ENCODE measurements at regions of chr9 and their contacts with region 1.

Region 1: GRCh38 chr9:133406480-133407307 is 11.1 kb downstream of the REXO4 start:
- DNase-seq: peak; percentile 68 to 86 (median 77)
- ATAC-seq: peak; percentile 81 to 86 (median 82)
- H3K4me3 ChIP-seq: no peak overlapping the region
- H3K27ac ChIP-seq: no peak overlapping the region
- H3K4me1 ChIP-seq: peaks cover 0 to 17% (median 0%) of the 10 kb centered on the region in 12 donors
- H3K27me3 ChIP-seq: no peaks in the 10 kb centered on the region
- CTCF ChIP-seq: peak; percentile 83 to 94 (median 89)
- POLR2A ChIP-seq: no peak

Region 2: DNA sequence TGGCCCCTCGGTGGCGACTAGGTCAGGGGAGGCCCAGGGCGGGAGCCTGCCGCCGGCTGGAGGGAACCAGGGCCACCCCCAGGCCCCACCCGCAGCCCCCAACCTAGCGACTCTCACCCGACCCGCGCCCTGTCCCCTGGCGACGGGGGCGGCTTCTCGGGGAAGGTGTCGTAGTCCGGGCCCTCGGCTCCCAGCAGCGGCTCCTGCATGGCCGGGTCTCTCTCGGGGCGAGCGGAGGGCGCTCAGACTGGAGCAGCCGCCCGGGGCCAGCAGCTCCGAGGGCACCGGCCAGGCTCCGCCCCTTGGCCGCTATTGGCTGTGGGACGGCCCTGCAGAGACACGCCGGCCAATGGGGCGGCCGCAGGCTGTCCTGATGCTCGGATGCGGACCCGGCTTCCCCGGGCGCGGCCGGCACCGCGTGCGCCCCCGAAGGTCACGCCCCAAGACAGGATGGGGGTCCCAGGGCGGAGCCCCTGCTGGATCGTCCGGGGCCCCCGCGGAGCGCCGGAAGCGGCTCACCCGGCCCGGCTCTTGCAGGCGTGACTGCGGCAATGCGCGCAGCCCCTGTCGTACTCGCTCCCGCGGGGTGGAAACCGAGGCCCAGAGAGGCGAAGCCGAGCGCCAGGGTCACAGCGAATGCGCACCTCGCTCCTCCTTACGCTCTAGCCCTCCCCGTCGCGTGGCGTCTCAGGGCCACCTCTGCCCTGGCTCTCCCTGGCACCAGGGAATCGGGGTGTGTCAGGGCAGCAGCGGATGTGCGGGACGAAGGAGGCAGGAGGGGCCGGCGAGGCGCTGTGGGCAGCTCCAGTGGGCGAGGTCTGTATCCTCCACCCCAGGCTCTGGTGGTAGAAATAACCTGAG is 72.4 kb after region 1 on chr9 and contains the start of gene SLC2A6:
- intact Hi-C with region 1: loop called in 2 of 10 experiments (anchors 2 kb)
- DNase-seq: peak; percentile 88 to 93 (median 92)
- ATAC-seq: peak; percentile 91 to 99 (median 98)
- H3K4me3 ChIP-seq: peak within 1 kb of the TSS; percentile 28 to 84 (median 64)
- H3K27ac ChIP-seq: peak within 1 kb of the TSS in 11 of 12 donors; percentile 52 to 87 (median 83)
- H3K4me1 ChIP-seq: peaks cover 0 to 53% (median 17%) of the 10 kb centered on the region in 12 donors
- H3K27me3 ChIP-seq: no peaks in the 10 kb centered on the region
- CTCF ChIP-seq: no peak
- POLR2A ChIP-seq: peak in 1 of 2 donors; percentile 79
- total RNA-seq, gene SLC2A6: 1.8 to 10.4 (median 3.2) TPM

Region 3: GRCh38 chr9:133714606-133715294 is 308.1 kb after region 1 on chr9:
- intact Hi-C with region 1: no loop called
- DNase-seq: peak; percentile 49 to 88 (median 82)
- ATAC-seq: peak in 3 of 4 donors; percentile 43 to 62 (median 53)
- H3K4me3 ChIP-seq: no peak overlapping the region
- H3K27ac ChIP-seq: peak overlapping the region in 9 of 12 donors; percentile 13 to 76 (median 52)
- H3K4me1 ChIP-seq: peaks cover 0 to 31% (median 10%) of the 10 kb centered on the region in 12 donors
- H3K27me3 ChIP-seq: peaks cover 0 to 17% (median 0%) of the 10 kb centered on the region in 9 donors
- CTCF ChIP-seq: no peak
- POLR2A ChIP-seq: no peak

Region 4: GRCh38 chr9:133726401-133727276 is 319.9 kb after region 1 on chr9:
- intact Hi-C with region 1: loop called in 5 of 10 experiments (anchors 2 to 10 kb)
- DNase-seq: peak; percentile 49 to 76 (median 56)
- ATAC-seq: peak; percentile 44 to 86 (median 76)
- H3K4me3 ChIP-seq: no peak overlapping the region
- H3K27ac ChIP-seq: no peak overlapping the region
- H3K4me1 ChIP-seq: no peaks in the 10 kb centered on the region
- H3K27me3 ChIP-seq: peaks cover 0 to 20% (median 4%) of the 10 kb centered on the region in 9 donors
- CTCF ChIP-seq: peak; percentile 49 to 74 (median 64)
- POLR2A ChIP-seq: no peak